HEK293T (cell line): ENCODE measurements at regions of chrX and their contacts with region 1.

Region 1: DNA sequence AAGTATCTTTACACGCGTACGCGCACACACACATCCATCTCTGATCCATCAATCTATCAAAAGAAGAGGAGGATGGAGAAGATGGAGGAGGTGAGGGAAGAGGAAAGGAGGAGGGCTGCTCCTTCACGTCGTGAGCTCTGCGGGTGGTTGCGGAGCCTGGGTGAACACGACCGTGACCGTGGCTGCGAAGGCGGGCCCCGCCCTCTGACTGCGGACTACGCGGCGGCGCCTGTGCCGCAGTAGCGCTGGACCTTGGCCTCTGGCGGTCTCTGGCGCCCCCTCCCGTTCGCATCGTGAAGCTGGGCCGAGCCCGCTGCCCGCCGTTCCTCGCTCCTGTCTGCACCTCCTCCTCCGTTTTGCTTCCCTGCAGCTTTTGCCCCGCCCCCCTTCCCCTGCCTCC is 37.7 kb upstream of the ARAF start:
- DNase-seq: peak; percentile 86

Region 2: GRCh38 chrX:47497273-47497672 is 26.0 kb before region 1 on chrX:
- CTCF ChIA-PET with region 1: interaction called, 18 read pairs
- POLR2A ChIA-PET with region 1: interaction called, 4 read pairs
- DNase-seq: no peak